ENCODE measurements at regions of chr5 and their contacts with region 1.

Region 1: DNA sequence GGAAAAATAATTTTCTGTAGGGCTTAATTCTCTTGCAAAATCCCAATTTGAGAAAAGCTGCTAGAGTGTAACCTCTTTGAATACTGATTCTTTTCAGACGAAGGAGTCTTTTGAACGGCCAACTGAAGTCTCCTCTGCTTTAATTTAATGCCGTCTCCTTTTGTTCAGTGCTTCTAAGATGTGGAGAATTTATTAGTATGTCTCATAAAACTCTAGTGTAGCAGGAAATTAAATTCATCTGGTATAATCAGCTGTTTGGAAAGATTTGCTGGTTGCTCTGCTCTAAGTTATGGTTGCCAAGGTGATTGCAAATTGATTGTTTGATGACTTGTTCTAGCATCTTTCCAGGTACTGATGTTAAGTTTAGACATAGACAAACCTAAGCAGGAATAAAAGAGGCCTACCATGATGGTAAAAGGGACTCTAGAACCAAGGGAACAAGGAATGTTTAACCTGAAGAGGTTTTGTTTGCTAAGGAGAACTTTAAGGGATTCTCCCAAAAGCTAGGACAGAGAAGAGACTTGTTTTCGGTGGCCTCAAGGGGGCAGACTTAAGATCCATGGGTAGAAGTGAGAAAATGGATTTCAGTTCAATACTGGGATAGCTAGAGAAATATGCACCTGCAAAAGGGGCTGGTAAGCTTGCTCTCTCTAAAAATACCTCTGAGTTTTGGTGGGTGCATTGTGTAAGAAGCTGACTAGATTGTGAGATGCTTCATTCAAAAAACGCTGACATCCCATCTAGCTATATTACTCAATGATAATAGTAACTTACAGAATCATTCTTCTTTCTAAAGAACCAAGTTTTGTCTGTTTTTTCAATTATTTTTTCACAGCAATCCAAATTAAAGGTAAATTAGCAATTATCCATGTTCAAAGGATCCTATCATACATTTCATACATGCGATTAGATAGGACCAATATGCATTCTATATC is 5.7 kb upstream of the ADRB2 start:
- DNase-seq: no peak
- H3K4me3 ChIP-seq: no peak overlapping the region
- CTCF ChIP-seq: peak; percentile 53

Region 2: DNA sequence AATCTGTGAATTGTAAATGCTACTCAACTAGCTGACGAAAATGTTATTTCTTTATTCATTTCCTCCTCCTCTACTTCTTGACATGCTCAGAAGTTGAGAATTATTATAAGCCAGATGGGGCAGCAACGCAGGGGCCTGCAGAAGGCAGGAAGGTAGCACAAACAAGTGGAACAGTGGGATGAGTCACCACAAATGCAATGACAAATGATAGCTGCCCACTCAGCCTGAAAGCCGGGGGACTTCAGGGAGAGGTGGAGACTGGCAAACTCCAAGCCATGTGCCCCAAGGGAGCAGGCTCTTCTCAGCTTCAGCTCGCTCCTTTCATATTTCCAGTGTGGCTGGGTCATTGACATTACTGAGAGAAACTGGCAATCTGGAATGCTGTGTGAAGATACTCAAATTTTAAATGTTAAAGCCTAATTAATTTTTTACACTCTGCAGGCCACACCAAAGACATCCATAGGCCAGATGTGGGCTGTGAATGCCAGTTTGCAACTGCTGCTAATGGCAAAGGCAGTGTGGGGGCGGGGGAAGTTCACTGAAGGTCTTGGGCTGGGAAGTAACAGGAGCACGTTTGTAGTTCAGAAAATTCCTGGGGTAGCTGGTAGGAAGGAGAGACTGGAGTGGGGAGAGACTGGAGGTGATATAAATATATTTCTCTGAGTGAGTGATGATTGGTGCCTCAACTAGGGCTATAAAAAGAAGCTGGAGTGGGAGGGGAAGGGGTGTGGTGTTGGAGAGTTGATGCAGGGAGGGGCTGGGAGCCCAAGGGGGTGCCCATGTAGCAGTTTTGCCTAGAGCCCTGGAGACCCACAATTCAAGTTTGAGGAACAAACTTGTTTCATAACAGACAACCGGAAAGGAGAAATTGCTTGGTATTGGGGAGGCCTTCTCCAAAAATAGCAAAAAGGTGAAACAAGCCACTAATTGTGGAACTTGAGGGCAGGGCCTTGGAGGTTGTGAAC is 15.1 kb before region 1 on chr5:
- CTCF ChIA-PET with region 1: interaction called, 29 read pairs
- POLR2A ChIA-PET with region 1: no interaction called
- DNase-seq: no peak
- H3K4me3 ChIP-seq: no peak overlapping the region
- CTCF ChIP-seq: no peak

Region 3: GRCh38 chr5:148831590-148832565 is 11.2 kb after region 1 on chr5:
- CTCF ChIA-PET with region 1: interaction called, 32 read pairs
- POLR2A ChIA-PET with region 1: no interaction called
- DNase-seq: no peak
- H3K4me3 ChIP-seq: no peak overlapping the region
- CTCF ChIP-seq: no peak

Region 4: GRCh38 chr5:148998174-148998797 is 177.6 kb after region 1 on chr5:
- CTCF ChIA-PET with region 1: interaction called, 24 read pairs
- POLR2A ChIA-PET with region 1: no interaction called
- DNase-seq: no peak
- H3K4me3 ChIP-seq: no peak overlapping the region
- CTCF ChIP-seq: peak; percentile 57

Measured in AG04449 (cell line).